ENCODE measurements at regions of chr12 and their contacts with region 1.

Region 1: GRCh38 chr12:13534645-13535398 is 338.3 kb downstream of the EMP1 start:
- DNase-seq: peak; percentile 79
- ATAC-seq: peak; percentile 74

Region 2: GRCh38 chr12:13278249-13278787 is 256.5 kb before region 1 on chr12:
- intact Hi-C with region 1: loop called (anchors 10 kb)
- DNase-seq: peak; percentile 87
- ATAC-seq: peak; percentile 97

Region 3: DNA sequence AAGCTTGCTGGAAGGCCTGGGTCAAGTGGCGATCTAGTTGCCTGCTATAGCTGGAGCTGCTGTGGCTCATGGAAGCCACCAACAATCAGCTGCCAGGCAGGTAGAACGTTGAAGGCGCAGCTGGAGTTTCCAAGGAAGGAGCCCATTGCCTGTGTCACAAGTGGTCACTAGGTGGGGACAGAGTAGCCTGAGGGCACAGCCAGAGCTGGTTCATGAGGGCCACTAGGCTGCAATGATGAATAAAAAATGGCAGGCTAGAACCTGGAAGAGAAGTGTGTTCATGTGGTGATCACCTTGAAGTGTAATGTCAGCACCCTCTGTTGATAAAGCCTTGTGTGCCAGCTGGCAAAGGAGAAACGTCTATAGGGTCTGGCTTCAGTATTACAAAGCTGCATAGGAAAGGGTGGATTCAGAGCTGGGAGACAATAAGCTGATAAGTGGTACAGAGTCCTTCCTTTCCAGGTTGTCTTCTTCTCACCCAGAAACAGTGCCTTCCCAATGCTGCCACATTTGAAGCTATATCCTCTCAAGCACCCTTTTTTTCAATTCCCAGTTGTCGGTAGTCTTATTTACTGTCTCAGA is 172.5 kb before region 1 on chr12:
- intact Hi-C with region 1: loop called (anchors 5 kb)
- DNase-seq: peak; percentile 61
- ATAC-seq: peak; percentile 86

Region 4: GRCh38 chr12:13436696-13437391 is 98.0 kb before region 1 on chr12:
- intact Hi-C with region 1: no loop called
- DNase-seq: peak; percentile 35
- ATAC-seq: peak; percentile 87

Region 5: DNA sequence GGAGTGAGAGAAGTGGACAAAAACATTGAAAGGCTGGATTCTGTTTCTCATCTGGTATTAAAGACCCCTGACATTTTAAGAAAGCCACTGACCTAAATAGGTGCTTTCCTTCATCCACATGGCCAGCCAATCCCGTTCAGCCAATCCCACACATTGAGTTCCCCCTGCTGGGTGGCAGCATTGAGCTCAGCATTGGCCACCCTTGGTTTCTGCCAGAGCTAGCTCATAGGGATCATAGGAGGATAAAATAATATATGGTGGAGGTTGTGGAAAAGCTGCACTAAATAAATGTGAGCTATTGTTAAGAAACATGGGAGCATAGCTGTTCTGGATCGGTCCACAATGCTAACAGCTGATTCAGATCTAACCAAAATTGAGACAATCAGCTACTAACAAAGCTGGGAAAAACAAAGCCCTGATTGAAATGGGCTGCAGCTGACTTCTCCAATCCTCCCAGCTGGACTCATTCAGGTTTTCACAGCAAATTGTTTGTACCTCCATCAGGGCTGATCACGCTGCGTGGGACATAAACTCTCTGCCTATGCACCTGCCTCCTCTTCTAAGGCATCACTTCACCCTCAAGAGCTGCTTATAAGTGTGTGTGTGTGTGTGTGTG is 81.8 kb before region 1 on chr12:
- intact Hi-C with region 1: no loop called
- DNase-seq: no peak
- ATAC-seq: no peak